Common myeloid progenitor, CD34-positive (primary cell): ENCODE measurements at regions of chr5 and their contacts with region 1.

Region 1: DNA sequence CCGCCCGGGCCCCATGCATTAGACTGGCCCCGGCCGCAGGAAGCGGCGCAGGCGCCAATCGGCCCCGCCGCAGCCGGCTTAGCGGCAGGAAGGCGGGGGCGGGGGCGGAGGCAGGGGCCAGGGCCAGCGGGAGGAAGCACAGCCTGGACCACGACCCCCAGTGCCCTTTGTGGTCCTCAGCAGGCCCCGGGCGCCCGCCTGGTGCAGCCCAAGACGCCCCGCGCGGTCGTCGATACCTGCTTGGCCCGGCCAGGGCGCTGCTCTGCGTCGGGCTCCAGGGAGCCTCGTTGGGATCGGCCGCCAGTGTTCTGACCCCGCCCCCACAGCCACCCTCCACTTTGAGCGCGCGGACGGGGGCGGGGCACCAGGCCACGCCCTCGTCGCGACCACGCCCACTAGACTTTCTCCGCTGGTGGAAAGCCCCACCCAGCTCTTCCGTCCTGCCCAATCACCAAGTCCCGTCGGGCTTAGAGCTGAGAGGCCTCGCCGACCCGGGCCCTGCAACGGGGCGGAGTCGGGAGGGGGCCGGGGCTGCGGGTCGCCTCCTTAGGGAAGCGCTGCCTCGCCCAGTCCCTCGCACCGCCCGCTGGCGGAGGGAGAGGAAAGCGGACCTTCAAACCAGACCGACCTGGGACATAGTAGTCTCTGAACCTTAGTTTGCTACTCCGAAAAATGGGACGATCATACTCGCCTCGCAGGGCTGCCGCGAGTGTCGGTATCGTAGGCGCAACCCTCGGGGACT is at the start of gene PDLIM7:
- DNase-seq: peak; percentile 92 to 96 (median 95)
- H3K4me3 ChIP-seq: peak within 1 kb of the TSS; percentile 39 to 78 (median 69)
- H3K27ac ChIP-seq: peak within 1 kb of the TSS in 1 of 2 experiments; percentile 66
- H3K4me1 ChIP-seq: peaks cover 2 to 63% (median 50%) of the 10 kb centered on the region in 4 experiments
- H3K27me3 ChIP-seq: peaks cover 0 to 5% (median 0%) of the 10 kb centered on the region in 5 experiments

Region 2: DNA sequence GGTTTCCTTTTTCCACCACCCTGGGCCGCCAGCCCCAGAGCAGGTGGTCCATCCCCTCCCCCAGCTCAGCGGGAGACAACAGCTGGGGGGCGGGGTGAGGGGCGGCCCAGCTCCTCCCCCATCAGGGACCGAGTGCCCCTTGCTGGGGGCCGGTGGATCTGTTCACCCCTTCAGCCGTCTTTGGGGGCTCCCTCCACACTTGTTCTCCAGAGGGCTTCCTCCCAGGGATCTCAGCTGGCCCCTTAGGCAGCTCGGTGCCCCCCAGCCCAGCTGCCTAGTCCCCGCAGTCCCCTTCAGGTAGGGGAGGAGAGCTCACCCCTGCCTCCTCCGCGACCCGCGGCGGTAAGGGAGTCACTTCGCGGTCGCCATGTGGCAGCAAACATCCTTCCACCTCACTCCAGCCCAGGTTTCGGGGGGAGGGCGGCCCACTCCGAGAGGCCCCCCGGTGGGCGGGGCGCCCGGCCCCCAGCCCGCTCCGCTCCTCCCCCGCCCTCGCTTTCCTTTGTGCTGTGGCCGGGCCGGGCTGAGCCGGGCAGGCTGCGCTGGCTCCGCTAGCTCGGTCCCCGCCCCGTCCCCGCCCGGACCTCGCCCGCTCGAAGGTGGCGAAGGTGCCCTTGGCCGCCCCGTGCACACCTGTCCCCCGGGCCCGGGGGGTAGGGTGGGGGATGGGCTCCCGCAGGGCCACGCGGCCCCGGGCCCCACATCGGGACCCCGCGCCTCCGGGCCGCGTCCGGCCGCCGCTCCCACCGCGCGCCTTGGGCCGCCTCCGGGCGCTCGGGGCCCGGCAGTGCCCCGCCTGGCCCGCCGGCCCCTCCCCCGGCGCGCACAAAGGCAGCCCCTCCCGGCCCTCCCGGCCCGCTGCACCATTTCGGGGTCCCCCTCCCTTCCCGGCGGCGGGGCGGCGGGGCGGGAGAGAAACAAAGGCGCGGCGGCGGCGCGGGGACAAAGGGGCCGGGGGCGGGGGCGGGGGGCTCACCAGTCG is 24.7 kb before region 1 on chr5:
- CTCF ChIA-PET with region 1: interaction called, 41 read pairs
- POLR2A ChIA-PET with region 1: interaction called, 3 read pairs
- DNase-seq: peak; percentile 59 to 88 (median 85)
- H3K4me3 ChIP-seq: peak overlapping the region in 6 of 7 experiments; percentile 36 to 76 (median 60)
- H3K27ac ChIP-seq: peak overlapping the region in 1 of 2 experiments; percentile 5
- H3K4me1 ChIP-seq: peaks cover 0 to 36% (median 32%) of the 10 kb centered on the region in 4 experiments
- H3K27me3 ChIP-seq: no peaks in the 10 kb centered on the region

Region 3: GRCh38 chr5:177478711-177479646 is 18.5 kb before region 1 on chr5:
- CTCF ChIA-PET with region 1: interaction called, 41 read pairs
- POLR2A ChIA-PET with region 1: interaction called, 5 read pairs
- DNase-seq: peak; percentile 70 to 89 (median 86)
- H3K4me3 ChIP-seq: no peak overlapping the region
- H3K27ac ChIP-seq: peak overlapping the region in 1 of 2 experiments; percentile 56
- H3K4me1 ChIP-seq: peaks cover 0 to 46% (median 40%) of the 10 kb centered on the region in 4 experiments
- H3K27me3 ChIP-seq: no peaks in the 10 kb centered on the region